ENCODE measurements at regions of chr4 and their contacts with region 1.

Region 1: DNA sequence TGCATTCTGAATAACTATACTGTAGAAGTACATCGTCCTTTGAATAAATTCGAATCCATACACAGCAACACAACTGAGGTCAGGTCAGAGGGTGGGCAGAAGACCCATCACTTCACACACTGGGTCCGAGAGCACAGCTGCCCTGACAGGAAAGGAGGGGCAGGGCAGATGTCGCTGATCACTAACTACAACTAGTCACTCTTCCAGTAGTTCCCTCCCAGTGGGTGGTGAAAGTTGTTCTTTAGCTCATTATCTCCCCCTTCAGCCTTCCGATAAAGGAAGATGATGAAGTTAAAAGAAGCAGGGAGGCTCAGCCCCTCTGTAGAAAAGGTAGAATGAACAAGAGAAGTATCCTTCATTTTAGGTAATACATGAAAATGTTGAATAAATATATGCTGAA is 278.9 kb downstream of the INPP4B start:
- DNase-seq: peak; percentile 7 to 75 (median 67)
- ATAC-seq: peak; percentile 82
- H3K4me3 ChIP-seq: peak overlapping the region; percentile 59
- H3K4me3 Mint-ChIP-seq: peak overlapping the region; percentile 82 to 98 (median 93)
- H3K27ac ChIP-seq: peak overlapping the region; percentile 84
- H3K27ac Mint-ChIP-seq: peak overlapping the region; percentile 92 to 99 (median 96)
- H3K4me1 ChIP-seq: peaks cover 10 to 45% of the 10 kb centered on the region in 2 donors
- H3K4me1 Mint-ChIP-seq: peaks cover 5 to 80% (median 66%) of the 10 kb centered on the region in 7 donors
- H3K27me3 ChIP-seq: no peaks in the 10 kb centered on the region
- H3K27me3 Mint-ChIP-seq: no peaks in the 10 kb centered on the region

Region 2: GRCh38 chr4:142282870-142283431 is 284.2 kb before region 1 on chr4:
- CTCF ChIA-PET with region 1: interaction called, 4 read pairs
- POLR2A ChIA-PET with region 1: interaction called, 18 read pairs
- intact Hi-C with region 1: loop called (anchors 1 kb)
- DNase-seq: peak in 7 of 9 donors; percentile 26 to 53 (median 38)
- ATAC-seq: peak; percentile 64
- H3K4me3 ChIP-seq: no peak overlapping the region
- H3K4me3 Mint-ChIP-seq: no peak overlapping the region
- H3K27ac ChIP-seq: no peak overlapping the region
- H3K27ac Mint-ChIP-seq: no peak overlapping the region
- H3K4me1 ChIP-seq: peaks cover 7 to 15% of the 10 kb centered on the region in 2 donors
- H3K4me1 Mint-ChIP-seq: peaks cover 9 to 35% (median 25%) of the 10 kb centered on the region in 7 donors
- H3K27me3 ChIP-seq: no peaks in the 10 kb centered on the region
- H3K27me3 Mint-ChIP-seq: no peaks in the 10 kb centered on the region

Region 3: DNA sequence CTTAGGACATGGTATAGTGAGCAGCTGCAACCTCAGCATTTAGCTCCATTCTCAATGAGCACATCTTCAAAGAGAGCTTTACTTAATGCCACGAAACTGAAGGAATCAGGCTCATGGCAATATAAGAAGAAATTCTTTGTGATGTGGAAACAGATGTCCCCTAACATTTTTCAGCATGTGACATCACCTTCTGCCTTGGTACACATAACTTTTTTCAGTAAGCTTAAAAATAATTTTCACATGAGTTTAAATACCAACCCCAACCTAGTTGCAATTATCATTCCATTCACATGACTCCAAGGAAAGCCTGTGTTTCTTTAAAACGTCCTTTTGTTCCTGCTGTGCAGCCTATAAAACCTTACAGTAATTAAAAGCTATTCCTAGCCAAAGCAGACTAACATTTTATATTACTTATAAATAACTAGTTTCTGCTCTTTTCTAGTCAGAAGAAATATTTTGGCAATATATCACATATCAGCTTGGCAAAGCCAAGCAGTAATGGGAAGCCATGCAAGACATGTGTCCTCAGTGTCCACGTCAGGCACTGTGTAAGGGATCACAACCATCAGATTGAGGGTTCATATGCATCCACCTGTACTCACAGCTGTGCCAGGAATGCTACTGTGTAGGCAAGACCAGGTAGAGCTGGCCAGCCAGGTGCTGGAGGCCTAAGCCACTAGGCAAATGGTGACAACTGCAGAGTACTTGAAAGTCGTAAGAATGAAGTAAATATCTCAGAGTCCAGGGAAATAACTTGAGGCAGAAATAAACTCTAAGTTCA is 187.7 kb before region 1 on chr4:
- CTCF ChIA-PET with region 1: interaction called, 3 read pairs
- POLR2A ChIA-PET with region 1: interaction called, 12 read pairs
- intact Hi-C with region 1: no loop called
- DNase-seq: no peak
- ATAC-seq: no peak
- H3K4me3 ChIP-seq: no peak overlapping the region
- H3K4me3 Mint-ChIP-seq: peak overlapping the region in 3 of 10 donors; percentile 28 to 72 (median 34)
- H3K27ac ChIP-seq: peak overlapping the region; percentile 53
- H3K27ac Mint-ChIP-seq: peak overlapping the region; percentile 8 to 85 (median 75)
- H3K4me1 ChIP-seq: peaks cover 41 to 64% of the 10 kb centered on the region in 2 donors
- H3K4me1 Mint-ChIP-seq: peaks cover 39 to 91% (median 87%) of the 10 kb centered on the region in 7 donors
- H3K27me3 ChIP-seq: no peaks in the 10 kb centered on the region
- H3K27me3 Mint-ChIP-seq: no peaks in the 10 kb centered on the region

Region 4: DNA sequence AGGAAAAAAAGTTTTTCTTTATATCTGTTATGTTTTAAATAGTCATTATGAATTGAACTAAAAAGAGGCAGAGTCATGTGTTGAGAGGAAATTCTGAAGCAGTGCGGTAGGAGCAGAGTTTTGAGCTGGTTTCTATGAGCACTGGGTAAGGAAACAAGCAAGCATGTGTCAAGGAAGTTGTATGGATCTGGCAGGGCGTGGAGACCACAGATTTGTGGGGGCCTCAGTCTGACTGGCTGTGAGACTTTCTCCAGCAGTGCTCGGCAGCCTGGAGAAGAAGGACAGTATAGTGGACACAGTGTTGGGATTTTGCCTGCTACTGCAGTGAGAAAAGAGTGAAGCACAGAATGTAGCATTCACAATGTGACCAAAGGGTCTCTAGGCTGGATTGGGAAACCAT is 120.2 kb before region 1 on chr4:
- CTCF ChIA-PET with region 1: no interaction called
- POLR2A ChIA-PET with region 1: no interaction called
- intact Hi-C with region 1: loop called in 1 of 2 experiments (anchors 2 kb)
- DNase-seq: peak in 1 of 9 donors; percentile 2
- ATAC-seq: peak; percentile 20
- H3K4me3 ChIP-seq: no peak overlapping the region
- H3K4me3 Mint-ChIP-seq: peak overlapping the region in 8 of 10 donors; percentile 16 to 78 (median 70)
- H3K27ac ChIP-seq: no peak overlapping the region
- H3K27ac Mint-ChIP-seq: peak overlapping the region in 7 of 9 donors; percentile 32 to 71 (median 56)
- H3K4me1 ChIP-seq: peaks cover 0 to 14% of the 10 kb centered on the region in 2 donors
- H3K4me1 Mint-ChIP-seq: peaks cover 10 to 50% (median 42%) of the 10 kb centered on the region in 7 donors
- H3K27me3 ChIP-seq: no peaks in the 10 kb centered on the region
- H3K27me3 Mint-ChIP-seq: no peaks in the 10 kb centered on the region

Region 5: GRCh38 chr4:142631836-142632235 is 64.6 kb after region 1 on chr4:
- CTCF ChIA-PET with region 1: no interaction called
- POLR2A ChIA-PET with region 1: no interaction called
- intact Hi-C with region 1: no loop called
- DNase-seq: no peak
- ATAC-seq: no peak
- H3K4me3 ChIP-seq: no peak overlapping the region
- H3K4me3 Mint-ChIP-seq: no peak overlapping the region
- H3K27ac ChIP-seq: no peak overlapping the region
- H3K27ac Mint-ChIP-seq: no peak overlapping the region
- H3K4me1 ChIP-seq: no peaks in the 10 kb centered on the region
- H3K4me1 Mint-ChIP-seq: peaks cover 0 to 1% (median 0%) of the 10 kb centered on the region in 7 donors
- H3K27me3 ChIP-seq: no peaks in the 10 kb centered on the region
- H3K27me3 Mint-ChIP-seq: no peaks in the 10 kb centered on the region

Region 6: GRCh38 chr4:142696334-142697122 is 129.3 kb after region 1 on chr4:
- CTCF ChIA-PET with region 1: interaction called, 3 read pairs
- POLR2A ChIA-PET with region 1: interaction called, 16 read pairs
- intact Hi-C with region 1: loop called (anchors 1 to 2 kb)
- DNase-seq: peak in 7 of 9 donors; percentile 25 to 49 (median 44)
- ATAC-seq: peak; percentile 77
- H3K4me3 ChIP-seq: peak overlapping the region; percentile 19
- H3K4me3 Mint-ChIP-seq: peak overlapping the region; percentile 31 to 87 (median 75)
- H3K27ac ChIP-seq: peak overlapping the region; percentile 65
- H3K27ac Mint-ChIP-seq: peak overlapping the region in 8 of 9 donors; percentile 87 to 98 (median 95)
- H3K4me1 ChIP-seq: peaks cover 41 to 64% of the 10 kb centered on the region in 2 donors
- H3K4me1 Mint-ChIP-seq: peaks cover 38 to 88% (median 72%) of the 10 kb centered on the region in 7 donors
- H3K27me3 ChIP-seq: no peaks in the 10 kb centered on the region
- H3K27me3 Mint-ChIP-seq: no peaks in the 10 kb centered on the region

Region 7: DNA sequence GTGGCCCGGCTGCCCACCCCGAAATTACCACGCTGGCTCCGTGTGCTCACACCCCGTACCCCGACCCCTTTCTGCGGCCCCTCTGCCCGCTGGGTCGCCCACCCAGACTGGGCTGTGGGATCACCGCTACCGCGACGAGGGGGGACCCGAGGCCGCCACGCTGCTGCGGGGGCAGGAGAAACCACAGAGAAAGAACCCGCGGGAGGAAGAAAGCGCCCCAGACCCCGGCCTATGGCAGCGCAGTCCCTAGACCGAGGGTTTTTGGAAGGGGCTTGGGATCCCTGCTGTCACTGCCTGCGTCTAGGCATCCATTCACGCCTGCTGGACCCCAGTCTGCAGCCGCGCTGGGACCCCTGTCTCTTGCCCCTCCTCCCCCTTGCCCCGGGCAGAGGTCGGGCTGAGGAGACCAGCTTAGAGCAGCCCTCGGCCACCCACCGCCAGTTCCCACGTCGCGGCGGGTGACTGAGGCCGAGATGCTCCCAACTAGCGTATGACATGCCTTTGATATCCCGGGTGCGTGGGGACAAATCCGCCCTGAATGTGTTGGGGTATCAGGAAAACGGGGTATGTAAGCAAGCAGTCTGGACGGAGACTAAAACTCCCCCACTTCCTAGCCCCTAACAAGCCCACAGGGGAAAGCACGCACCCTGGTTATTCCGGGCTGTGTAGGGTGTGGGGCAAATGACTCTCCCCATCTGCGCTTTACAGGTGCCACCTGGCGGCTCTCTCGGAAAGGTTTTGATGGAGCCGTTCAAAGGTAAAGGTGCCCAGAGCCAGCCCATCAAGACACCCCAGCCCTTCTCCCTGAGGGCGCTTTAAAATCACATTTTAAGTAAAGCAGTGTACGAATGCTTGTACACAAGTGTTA is 279.8 kb after region 1 on chr4:
- CTCF ChIA-PET with region 1: no interaction called
- POLR2A ChIA-PET with region 1: no interaction called
- intact Hi-C with region 1: loop called (anchors 1 kb)
- DNase-seq: peak; percentile 39 to 81 (median 75)
- ATAC-seq: peak; percentile 89
- H3K4me3 ChIP-seq: peak overlapping the region; percentile 86
- H3K4me3 Mint-ChIP-seq: peak overlapping the region; percentile 85 to 94 (median 92)
- H3K27ac ChIP-seq: peak overlapping the region; percentile 54
- H3K27ac Mint-ChIP-seq: peak overlapping the region in 5 of 9 donors; percentile 26 to 76 (median 56)
- H3K4me1 ChIP-seq: peaks cover 5 to 7% of the 10 kb centered on the region in 2 donors
- H3K4me1 Mint-ChIP-seq: peaks cover 10 to 28% (median 16%) of the 10 kb centered on the region in 7 donors
- H3K27me3 ChIP-seq: peaks cover 0 to 4% of the 10 kb centered on the region in 2 donors
- H3K27me3 Mint-ChIP-seq: peaks cover 5 to 26% (median 22%) of the 10 kb centered on the region in 5 donors

Region 8: DNA sequence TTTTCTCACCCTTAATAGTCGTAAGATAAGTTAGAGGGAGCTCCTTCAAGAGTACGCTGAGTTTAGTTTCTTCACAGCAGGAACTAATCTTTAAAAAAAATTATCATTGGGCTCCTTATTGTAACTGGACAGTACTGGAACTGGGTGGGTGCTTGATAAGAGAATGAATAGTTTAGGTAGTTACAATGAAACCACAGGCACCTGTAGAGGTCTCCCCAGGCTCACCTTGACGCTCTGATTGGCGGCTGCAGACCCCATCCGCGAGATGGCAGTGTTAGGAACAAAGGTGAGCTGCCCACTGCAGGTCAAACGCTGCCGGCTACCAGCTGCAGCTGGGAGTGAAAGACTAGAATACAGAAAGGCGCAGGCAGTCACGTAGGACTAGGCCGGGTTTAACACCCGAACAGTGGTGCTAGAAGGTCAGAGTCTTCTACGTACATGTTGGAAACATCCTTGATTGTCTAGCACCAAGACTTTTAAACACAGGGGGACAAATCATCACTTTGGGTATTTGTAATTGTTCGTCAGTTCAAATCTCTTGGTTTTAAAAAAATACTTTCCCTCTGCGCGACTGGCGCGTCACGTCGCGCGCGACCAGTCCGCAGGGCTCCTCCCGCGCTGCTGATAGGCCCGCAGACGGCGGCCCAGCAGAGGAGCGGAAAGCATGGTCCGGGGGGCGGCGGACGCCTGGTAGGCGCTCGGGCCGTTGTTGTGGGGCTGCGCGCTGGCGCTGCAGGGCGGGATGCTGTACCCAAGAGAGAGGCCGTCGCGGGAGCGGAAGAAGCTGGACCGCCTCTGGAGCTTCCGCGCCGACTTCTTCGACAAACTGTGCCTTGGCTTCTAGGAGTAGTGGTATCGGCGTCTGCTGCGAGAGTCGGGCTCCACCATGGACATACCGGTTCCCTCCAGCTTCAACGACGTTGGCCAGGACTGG is 991.9 kb after region 1 on chr4:
- CTCF ChIA-PET with region 1: no interaction called
- POLR2A ChIA-PET with region 1: no interaction called
- intact Hi-C with region 1: loop called in 1 of 2 experiments (anchors 5 kb)
- DNase-seq: peak; percentile 38 to 80 (median 58)
- ATAC-seq: peak; percentile 86
- H3K4me3 ChIP-seq: peak overlapping the region; percentile 79
- H3K4me3 Mint-ChIP-seq: peak overlapping the region; percentile 87 to 97 (median 90)
- H3K27ac ChIP-seq: peak overlapping the region; percentile 52
- H3K27ac Mint-ChIP-seq: peak overlapping the region; percentile 78 to 96 (median 91)
- H3K4me1 ChIP-seq: peaks cover 7 to 11% of the 10 kb centered on the region in 2 donors
- H3K4me1 Mint-ChIP-seq: peaks cover 8 to 40% (median 28%) of the 10 kb centered on the region in 7 donors
- H3K27me3 ChIP-seq: no peaks in the 10 kb centered on the region
- H3K27me3 Mint-ChIP-seq: no peaks in the 10 kb centered on the region